Sigmoid colon (tissue), 7 donors: ENCODE measurements at regions of chrX and their contacts with region 1.

Region 1: DNA sequence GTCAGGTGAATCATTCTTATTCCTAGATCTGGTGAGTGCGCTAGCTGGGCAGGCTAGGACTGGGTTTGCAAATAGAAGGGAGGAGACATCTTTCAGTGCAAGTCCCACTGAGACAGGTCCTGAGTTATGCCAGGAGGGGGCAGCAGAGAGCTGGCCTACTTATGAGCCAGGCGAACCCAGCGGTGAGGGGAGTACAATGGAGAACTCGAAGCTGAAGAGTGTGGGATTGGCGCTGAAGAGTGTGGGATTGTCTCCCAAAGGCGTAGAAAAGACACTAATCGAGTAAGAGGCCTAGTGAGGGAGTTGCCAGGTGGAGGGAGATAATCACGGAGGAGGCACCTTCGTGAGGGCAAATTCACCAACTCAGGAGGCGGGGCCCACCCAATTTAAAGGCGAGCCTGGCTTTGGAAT is 91.7 kb upstream of the CXorf66 start:
- DNase-seq: peak; percentile 80
- H3K4me3 ChIP-seq: no peak overlapping the region
- H3K27ac ChIP-seq: no peak overlapping the region
- H3K4me1 ChIP-seq: no peaks in the 10 kb centered on the region
- H3K27me3 ChIP-seq: no peaks in the 10 kb centered on the region
- CTCF ChIP-seq: peak; percentile 29 to 66 (median 50)
- EP300 ChIP-seq: no peak
- POLR2A ChIP-seq: no peak

Region 2: GRCh38 chrX:139864640-139865039 is 192.4 kb before region 1 on chrX:
- intact Hi-C with region 1: no loop called
- DNase-seq: no peak
- H3K4me3 ChIP-seq: no peak overlapping the region
- H3K27ac ChIP-seq: no peak overlapping the region
- H3K4me1 ChIP-seq: no peaks in the 10 kb centered on the region
- H3K27me3 ChIP-seq: no peaks in the 10 kb centered on the region
- CTCF ChIP-seq: no peak
- EP300 ChIP-seq: no peak
- POLR2A ChIP-seq: no peak

Region 3: DNA sequence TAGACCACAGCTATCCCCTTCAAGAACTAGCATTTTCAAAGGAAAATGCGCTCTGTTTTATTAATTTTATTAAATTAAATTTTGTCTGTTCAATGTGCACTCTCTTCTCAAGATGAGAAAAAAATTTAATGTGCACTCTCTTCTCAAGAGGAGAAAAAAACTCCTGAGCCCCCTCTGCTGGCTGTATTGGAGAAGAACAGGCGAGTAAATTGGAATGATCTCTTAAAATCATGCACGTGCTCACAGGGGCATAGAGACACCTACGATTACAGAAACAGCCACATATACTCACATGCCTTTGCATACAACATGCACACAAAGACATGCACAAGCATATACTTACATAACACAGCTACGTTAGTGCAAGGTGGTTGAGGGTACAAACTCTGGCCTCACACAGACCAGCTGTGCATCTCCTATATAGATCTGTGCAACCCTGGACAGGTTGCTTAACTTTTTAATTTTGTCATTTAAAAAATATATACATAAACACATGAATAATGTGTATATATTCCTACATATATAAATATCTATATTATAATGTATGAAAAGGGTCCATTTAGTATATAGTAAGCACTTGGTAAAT is 84.5 kb after region 1 on chrX:
- intact Hi-C with region 1: loop called (anchors 1 kb)
- DNase-seq: no peak
- H3K4me3 ChIP-seq: no peak overlapping the region
- H3K27ac ChIP-seq: no peak overlapping the region
- H3K4me1 ChIP-seq: no peaks in the 10 kb centered on the region
- H3K27me3 ChIP-seq: no peaks in the 10 kb centered on the region
- CTCF ChIP-seq: peak in 3 of 4 experiments; percentile 11 to 42 (median 35)
- EP300 ChIP-seq: no peak
- POLR2A ChIP-seq: no peak

Region 4: GRCh38 chrX:140664939-140665338 is 607.9 kb after region 1 on chrX:
- intact Hi-C with region 1: loop called (anchors 10 kb)
- DNase-seq: no peak
- H3K4me3 ChIP-seq: no peak overlapping the region
- H3K27ac ChIP-seq: no peak overlapping the region
- H3K4me1 ChIP-seq: no peaks in the 10 kb centered on the region
- H3K27me3 ChIP-seq: no peaks in the 10 kb centered on the region
- CTCF ChIP-seq: peak in 1 of 4 experiments; percentile 12
- EP300 ChIP-seq: no peak
- POLR2A ChIP-seq: no peak

Region 5: DNA sequence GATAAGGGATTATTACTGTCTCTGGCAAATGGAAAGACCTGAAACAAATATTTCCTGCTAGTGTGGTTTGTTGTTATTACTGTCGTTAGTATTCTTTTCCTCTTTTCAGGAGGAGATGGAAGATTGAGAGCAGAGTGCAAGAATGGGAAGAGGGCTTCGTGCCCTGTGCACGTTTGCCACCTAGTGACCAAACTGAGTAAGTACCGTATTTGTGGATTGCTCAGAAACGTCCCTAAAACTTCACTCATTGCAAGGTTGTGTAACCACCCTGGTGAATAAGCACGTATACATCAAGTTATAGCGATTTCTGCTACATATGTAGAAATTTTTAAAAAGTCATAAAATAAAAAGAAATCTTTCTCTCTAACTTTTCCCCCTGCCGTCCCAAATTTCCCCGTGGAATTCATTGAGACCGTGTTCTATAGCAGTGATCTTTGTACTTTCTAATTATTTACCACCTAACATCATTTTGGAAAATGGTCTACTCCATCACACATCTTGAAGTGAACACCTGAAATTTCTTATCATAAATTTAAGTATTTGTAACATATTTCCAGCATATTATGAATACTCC is 676.9 kb after region 1 on chrX:
- intact Hi-C with region 1: loop called (anchors 10 kb)
- DNase-seq: no peak
- H3K4me3 ChIP-seq: no peak overlapping the region
- H3K27ac ChIP-seq: no peak overlapping the region
- H3K4me1 ChIP-seq: no peaks in the 10 kb centered on the region
- H3K27me3 ChIP-seq: no peaks in the 10 kb centered on the region
- CTCF ChIP-seq: peak in 3 of 4 experiments; percentile 13 to 58 (median 49)
- EP300 ChIP-seq: no peak
- POLR2A ChIP-seq: no peak